ENCODE measurements at regions of chr15 and their contacts with region 1.

Region 1: GRCh38 chr15:80989518-80990478 is at the start of gene MESD:
- DNase-seq: peak; percentile 93 to 94 (median 94)
- H3K4me3 ChIP-seq: peak within 1 kb of the TSS; percentile 68 to 96 (median 87)
- H3K4me3 Mint-ChIP-seq: peak within 1 kb of the TSS; percentile 93 to 99
- H3K27ac ChIP-seq: peak within 1 kb of the TSS; percentile 80 to 85
- H3K27ac Mint-ChIP-seq: peak within 1 kb of the TSS; percentile 94 to 99 (median 96)
- H3K4me1 ChIP-seq: peaks cover 57 to 60% of the 10 kb centered on the region in 2 donors
- H3K4me1 Mint-ChIP-seq: peaks cover 59% of the 10 kb centered on the region
- H3K27me3 ChIP-seq: no peaks in the 10 kb centered on the region
- H3K27me3 Mint-ChIP-seq: peaks cover 0 to 6% (median 4%) of the 10 kb centered on the region in 3 donors
- CTCF ChIP-seq: no peak
- polyA plus RNA-seq, gene MESD: 5.6 to 15.7 (median 13.1) TPM

Region 2: DNA sequence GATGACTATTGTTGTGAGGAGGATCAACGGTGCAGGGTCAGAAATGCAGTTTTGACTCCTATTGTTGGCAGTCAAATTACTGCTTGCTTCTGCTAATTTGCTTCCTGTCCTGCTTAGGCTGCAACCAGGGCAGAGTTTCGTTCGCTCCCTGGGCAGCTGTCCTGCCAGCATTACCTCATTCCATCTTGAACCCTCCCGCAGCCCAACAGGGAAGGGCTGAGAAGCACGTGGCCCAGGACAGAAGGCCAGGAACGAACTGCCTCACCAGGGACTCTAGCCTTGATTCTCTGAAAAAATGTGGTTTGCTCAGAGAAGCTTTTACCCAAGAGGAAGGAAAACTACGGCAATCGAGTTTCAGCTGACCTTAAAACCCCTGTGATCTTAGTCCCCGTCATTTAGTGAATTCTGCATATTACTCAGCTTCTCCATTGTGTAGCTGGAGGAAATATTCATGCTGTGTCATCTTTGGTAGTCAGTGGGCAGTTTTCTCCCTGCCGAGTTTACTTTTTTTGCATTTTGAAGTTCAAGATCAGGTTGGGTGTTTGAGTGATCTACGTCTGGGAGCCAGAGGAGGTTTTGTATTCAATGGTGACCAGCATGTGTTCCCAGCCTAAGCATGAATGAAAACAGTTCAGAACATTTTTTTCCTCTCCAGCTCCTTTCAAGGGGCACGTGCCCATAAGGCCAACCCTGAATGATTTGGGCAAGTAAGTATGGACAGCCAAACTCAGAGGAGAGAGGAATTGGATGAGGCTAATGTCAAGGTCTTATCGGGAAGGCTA is 33.9 kb after region 1 on chr15:
- intact Hi-C with region 1: loop called in 1 of 2 experiments (anchors 5 kb)
- DNase-seq: peak; percentile 85 to 93 (median 93)
- H3K4me3 ChIP-seq: peak overlapping the region in 2 of 3 experiments; percentile 4 to 64
- H3K4me3 Mint-ChIP-seq: peak overlapping the region; percentile 57 to 80
- H3K27ac ChIP-seq: peak overlapping the region; percentile 84 to 95
- H3K27ac Mint-ChIP-seq: peak overlapping the region; percentile 94 to 99 (median 98)
- H3K4me1 ChIP-seq: peaks cover 35 to 44% of the 10 kb centered on the region in 2 donors
- H3K4me1 Mint-ChIP-seq: peaks cover 35% of the 10 kb centered on the region
- H3K27me3 ChIP-seq: no peaks in the 10 kb centered on the region
- H3K27me3 Mint-ChIP-seq: no peaks in the 10 kb centered on the region
- CTCF ChIP-seq: no peak

Region 3: GRCh38 chr15:81029414-81030300 is 39.9 kb after region 1 on chr15:
- intact Hi-C with region 1: loop called (anchors 5 to 10 kb)
- DNase-seq: peak; percentile 29 to 70 (median 43)
- H3K4me3 ChIP-seq: peak overlapping the region in 1 of 3 experiments; percentile 25
- H3K4me3 Mint-ChIP-seq: peak overlapping the region in 1 of 2 donors; percentile 50
- H3K27ac ChIP-seq: peak overlapping the region in 1 of 2 donors; percentile 35
- H3K27ac Mint-ChIP-seq: peak overlapping the region; percentile 48 to 88 (median 82)
- H3K4me1 ChIP-seq: peaks cover 33 to 38% of the 10 kb centered on the region in 2 donors
- H3K4me1 Mint-ChIP-seq: peaks cover 34% of the 10 kb centered on the region
- H3K27me3 ChIP-seq: no peaks in the 10 kb centered on the region
- H3K27me3 Mint-ChIP-seq: peaks cover 0 to 5% (median 0%) of the 10 kb centered on the region in 3 donors
- CTCF ChIP-seq: no peak

Region 4: GRCh38 chr15:81106560-81106959 is 116.8 kb after region 1 on chr15:
- intact Hi-C with region 1: loop called in 1 of 2 experiments (anchors 2 kb)
- DNase-seq: peak; percentile 33 to 42 (median 35)
- H3K4me3 ChIP-seq: no peak overlapping the region
- H3K4me3 Mint-ChIP-seq: no peak overlapping the region
- H3K27ac ChIP-seq: no peak overlapping the region
- H3K27ac Mint-ChIP-seq: peak overlapping the region in 1 of 7 donors; percentile 36
- H3K4me1 ChIP-seq: no peaks in the 10 kb centered on the region
- H3K4me1 Mint-ChIP-seq: peaks cover 6% of the 10 kb centered on the region
- H3K27me3 ChIP-seq: peaks cover 0 to 3% of the 10 kb centered on the region in 2 donors
- H3K27me3 Mint-ChIP-seq: peaks cover 5 to 12% (median 8%) of the 10 kb centered on the region in 3 donors
- CTCF ChIP-seq: peak; percentile 81

Region 5: DNA sequence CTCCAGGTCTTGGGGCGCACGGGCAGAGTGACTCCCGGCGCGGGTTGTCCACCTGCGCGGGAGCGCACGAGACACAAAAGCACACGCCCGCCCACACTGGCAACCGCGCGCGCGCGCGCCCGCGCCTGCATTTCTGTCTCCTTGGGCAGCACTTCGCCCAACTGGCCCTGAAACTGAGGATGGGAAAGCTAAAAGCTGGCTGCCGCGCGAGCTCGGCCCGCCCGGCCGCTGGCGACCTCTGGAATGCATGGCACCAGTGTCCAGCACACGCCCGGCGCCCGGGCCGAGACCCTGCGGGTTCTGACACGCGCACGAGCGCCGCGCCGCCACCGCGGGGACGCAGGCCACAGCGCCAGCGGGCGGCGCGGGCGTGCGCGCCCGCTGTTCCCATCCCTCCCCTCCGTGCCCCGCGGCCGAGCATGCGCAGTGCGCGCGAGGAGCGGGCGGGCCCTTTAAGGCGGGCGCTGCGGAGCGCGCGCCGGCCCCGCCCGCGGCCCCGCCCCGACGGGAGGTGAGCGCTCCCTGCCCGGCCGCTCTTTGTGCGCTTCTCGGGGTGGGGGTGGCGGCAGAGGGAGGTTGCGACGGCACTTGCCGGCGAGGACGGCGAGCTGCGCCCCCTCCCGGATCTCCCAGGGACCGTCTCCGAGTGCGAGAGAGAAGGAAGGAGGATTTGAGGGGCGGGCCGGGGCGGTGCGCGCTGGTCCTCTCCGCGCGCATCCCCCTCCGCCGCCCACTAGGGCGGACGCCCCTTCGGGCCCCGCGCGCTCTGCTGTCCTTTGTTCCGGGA is 1057.1 kb after region 1 on chr15:
- intact Hi-C with region 1: loop called in 1 of 2 experiments (anchors 10 kb)
- DNase-seq: peak; percentile 86 to 89 (median 88)
- H3K4me3 ChIP-seq: peak overlapping the region; percentile 80 to 85 (median 82)
- H3K4me3 Mint-ChIP-seq: peak overlapping the region; percentile 93
- H3K27ac ChIP-seq: peak overlapping the region; percentile 78 to 82
- H3K27ac Mint-ChIP-seq: peak overlapping the region; percentile 76 to 94 (median 90)
- H3K4me1 ChIP-seq: peaks cover 26 to 40% of the 10 kb centered on the region in 2 donors
- H3K4me1 Mint-ChIP-seq: peaks cover 22% of the 10 kb centered on the region
- H3K27me3 ChIP-seq: peaks cover 8 to 32% of the 10 kb centered on the region in 2 donors
- H3K27me3 Mint-ChIP-seq: peaks cover 27 to 42% (median 27%) of the 10 kb centered on the region in 3 donors
- CTCF ChIP-seq: peak; percentile 77